ENCODE measurements at regions of chr10 and their contacts with region 1.

Region 1: DNA sequence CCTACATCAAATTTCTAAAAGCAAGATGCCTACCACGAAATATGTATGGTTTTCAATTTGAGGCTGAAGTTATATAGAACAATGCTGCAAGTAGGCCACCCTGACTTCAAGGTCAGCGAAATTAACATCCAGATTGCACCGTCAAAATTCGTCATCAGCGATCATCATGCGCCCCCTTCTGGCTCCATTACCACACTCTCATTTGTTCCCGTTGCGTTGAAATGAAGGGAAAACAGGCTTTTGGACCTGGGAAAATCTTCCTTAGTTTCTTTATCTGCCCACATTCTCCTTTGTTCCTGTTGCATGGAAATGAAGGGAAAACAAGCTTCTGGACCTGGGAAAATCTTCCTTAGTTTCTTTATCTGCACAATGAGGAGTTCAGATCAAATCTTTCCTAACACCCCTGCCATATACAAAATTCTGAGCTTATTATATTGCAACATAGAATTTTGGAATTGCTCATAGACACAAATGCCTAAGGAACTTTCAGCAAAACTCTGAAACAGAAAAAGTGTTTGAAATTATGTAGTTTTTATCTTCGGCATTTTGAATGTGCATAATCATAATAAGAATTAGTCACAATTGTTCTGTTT is 98.2 kb upstream of the PRKCQ start:
- DNase-seq: peak; percentile 23 to 78 (median 68)
- ATAC-seq: peak; percentile 52
- H3K4me3 ChIP-seq: no peak overlapping the region
- H3K4me3 Mint-ChIP-seq: no peak overlapping the region
- H3K27ac ChIP-seq: no peak overlapping the region
- H3K27ac Mint-ChIP-seq: no peak overlapping the region
- H3K4me1 ChIP-seq: no peaks in the 10 kb centered on the region
- H3K4me1 Mint-ChIP-seq: peaks cover 4% of the 10 kb centered on the region
- H3K27me3 ChIP-seq: no peaks in the 10 kb centered on the region
- H3K27me3 Mint-ChIP-seq: no peaks in the 10 kb centered on the region
- CTCF ChIP-seq: peak; percentile 71

Region 2: GRCh38 chr10:6108603-6109443 is 569.5 kb before region 1 on chr10:
- CTCF ChIA-PET with region 1: interaction called, 3 read pairs
- POLR2A ChIA-PET with region 1: no interaction called
- intact Hi-C with region 1: loop called (anchors 2 to 5 kb)
- DNase-seq: peak in 5 of 9 experiments; percentile 15 to 77 (median 44)
- ATAC-seq: peak; percentile 85
- H3K4me3 ChIP-seq: no peak overlapping the region
- H3K4me3 Mint-ChIP-seq: peak overlapping the region; percentile 53
- H3K27ac ChIP-seq: no peak overlapping the region
- H3K27ac Mint-ChIP-seq: peak overlapping the region; percentile 62
- H3K4me1 ChIP-seq: peaks cover 8% of the 10 kb centered on the region
- H3K4me1 Mint-ChIP-seq: peaks cover 29% of the 10 kb centered on the region
- H3K27me3 ChIP-seq: no peaks in the 10 kb centered on the region
- H3K27me3 Mint-ChIP-seq: no peaks in the 10 kb centered on the region
- CTCF ChIP-seq: peak; percentile 86

Region 3: GRCh38 chr10:6348096-6348874 is 330.0 kb before region 1 on chr10:
- CTCF ChIA-PET with region 1: no interaction called
- POLR2A ChIA-PET with region 1: no interaction called
- intact Hi-C with region 1: no loop called
- DNase-seq: peak; percentile 59 to 96 (median 81)
- ATAC-seq: peak; percentile 89
- H3K4me3 ChIP-seq: peak overlapping the region; percentile 30 to 39
- H3K4me3 Mint-ChIP-seq: peak overlapping the region; percentile 81
- H3K27ac ChIP-seq: peak overlapping the region; percentile 71 to 79
- H3K27ac Mint-ChIP-seq: peak overlapping the region; percentile 97
- H3K4me1 ChIP-seq: peaks cover 34% of the 10 kb centered on the region
- H3K4me1 Mint-ChIP-seq: peaks cover 61% of the 10 kb centered on the region
- H3K27me3 ChIP-seq: no peaks in the 10 kb centered on the region
- H3K27me3 Mint-ChIP-seq: no peaks in the 10 kb centered on the region
- CTCF ChIP-seq: no peak

Region 4: GRCh38 chr10:6409971-6410651 is 268.2 kb before region 1 on chr10:
- CTCF ChIA-PET with region 1: interaction called, 65 read pairs
- POLR2A ChIA-PET with region 1: no interaction called
- intact Hi-C with region 1: no loop called
- DNase-seq: peak in 8 of 9 experiments; percentile 15 to 87 (median 56)
- ATAC-seq: peak; percentile 93
- H3K4me3 ChIP-seq: peak overlapping the region in 1 of 2 experiments; percentile 18
- H3K4me3 Mint-ChIP-seq: peak overlapping the region; percentile 43
- H3K27ac ChIP-seq: peak overlapping the region; percentile 42 to 89
- H3K27ac Mint-ChIP-seq: peak overlapping the region; percentile 95
- H3K4me1 ChIP-seq: peaks cover 17% of the 10 kb centered on the region
- H3K4me1 Mint-ChIP-seq: peaks cover 38% of the 10 kb centered on the region
- H3K27me3 ChIP-seq: no peaks in the 10 kb centered on the region
- H3K27me3 Mint-ChIP-seq: no peaks in the 10 kb centered on the region
- CTCF ChIP-seq: no peak

Region 5: DNA sequence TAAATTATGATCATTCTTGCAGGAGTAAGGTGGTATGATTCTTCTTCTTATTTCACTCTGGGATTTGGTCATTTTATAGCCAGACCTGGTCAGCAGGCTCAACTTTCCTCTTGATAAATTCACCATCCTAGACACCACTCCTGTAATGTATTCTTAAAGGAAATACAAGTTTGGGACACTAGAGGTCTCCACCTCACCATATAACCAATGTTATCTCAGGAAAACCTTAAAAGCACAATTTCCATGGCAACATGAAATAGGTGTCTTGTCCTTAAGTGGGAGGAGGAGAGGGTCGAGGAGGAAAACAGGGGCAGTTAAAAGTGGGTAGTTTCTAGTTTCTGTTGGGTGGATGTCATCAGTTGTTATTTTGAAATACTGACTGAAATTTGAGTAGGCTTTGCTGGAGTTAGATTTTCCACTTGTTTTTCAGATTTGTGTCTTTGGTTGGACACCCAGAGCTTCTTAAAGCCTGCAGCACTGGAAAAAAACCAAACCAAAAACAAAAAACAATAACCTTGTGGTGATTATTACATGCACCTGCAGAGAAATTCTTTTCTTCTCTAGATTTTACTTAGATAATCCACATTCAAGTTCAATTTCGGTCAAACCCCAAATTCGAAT is 261.3 kb before region 1 on chr10:
- CTCF ChIA-PET with region 1: interaction called, 65 read pairs
- POLR2A ChIA-PET with region 1: no interaction called
- intact Hi-C with region 1: loop called (anchors 1 kb)
- DNase-seq: peak in 2 of 9 experiments; percentile 65 to 75
- ATAC-seq: peak; percentile 72
- H3K4me3 ChIP-seq: no peak overlapping the region
- H3K4me3 Mint-ChIP-seq: no peak overlapping the region
- H3K27ac ChIP-seq: no peak overlapping the region
- H3K27ac Mint-ChIP-seq: no peak overlapping the region
- H3K4me1 ChIP-seq: no peaks in the 10 kb centered on the region
- H3K4me1 Mint-ChIP-seq: no peaks in the 10 kb centered on the region
- H3K27me3 ChIP-seq: no peaks in the 10 kb centered on the region
- H3K27me3 Mint-ChIP-seq: no peaks in the 10 kb centered on the region
- CTCF ChIP-seq: peak; percentile 74

Region 6: DNA sequence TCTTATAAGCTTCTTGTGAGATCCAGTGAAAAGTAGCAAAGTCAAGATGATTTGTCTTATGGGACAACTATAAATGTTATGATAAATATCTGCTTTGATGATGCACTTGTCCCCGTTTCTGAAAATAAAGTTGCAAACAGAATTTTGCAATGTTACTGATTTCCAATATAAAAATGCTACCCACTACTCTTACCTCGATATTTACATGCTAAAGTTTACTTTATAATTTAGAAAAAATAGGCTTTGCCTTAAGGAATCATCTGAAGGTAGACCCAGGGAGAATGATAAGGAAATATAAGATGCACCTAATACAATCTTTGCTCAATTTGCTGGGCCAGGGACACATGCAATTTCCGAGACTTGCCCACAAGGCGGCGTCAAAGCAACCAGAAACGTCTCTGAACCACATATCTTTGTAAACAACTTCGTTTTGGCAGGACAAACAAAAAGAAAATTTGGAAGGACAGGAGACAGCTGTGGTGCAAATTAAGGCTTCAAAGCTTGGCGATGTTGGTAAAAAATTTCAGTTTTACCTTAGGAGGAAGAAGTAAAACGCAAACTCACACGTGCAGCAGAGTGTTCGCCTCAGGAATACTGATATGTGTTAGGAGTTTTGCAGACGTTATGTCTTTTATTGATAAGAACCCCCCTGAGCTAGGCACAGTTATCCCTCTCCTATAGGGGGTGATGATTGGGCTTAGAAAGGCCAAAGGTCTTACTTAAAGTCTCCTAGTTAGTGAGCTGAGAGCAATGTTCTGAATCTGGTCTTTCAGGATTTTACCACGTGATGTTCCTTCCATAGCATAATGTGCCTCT is 232.6 kb before region 1 on chr10:
- CTCF ChIA-PET with region 1: interaction called, 14 read pairs
- POLR2A ChIA-PET with region 1: no interaction called
- intact Hi-C with region 1: loop called (anchors 1 to 2 kb)
- DNase-seq: peak; percentile 36 to 76 (median 64)
- ATAC-seq: peak; percentile 58
- H3K4me3 ChIP-seq: no peak overlapping the region
- H3K4me3 Mint-ChIP-seq: no peak overlapping the region
- H3K27ac ChIP-seq: peak overlapping the region in 1 of 2 experiments; percentile 47
- H3K27ac Mint-ChIP-seq: peak overlapping the region; percentile 83
- H3K4me1 ChIP-seq: peaks cover 8% of the 10 kb centered on the region
- H3K4me1 Mint-ChIP-seq: peaks cover 22% of the 10 kb centered on the region
- H3K27me3 ChIP-seq: no peaks in the 10 kb centered on the region
- H3K27me3 Mint-ChIP-seq: no peaks in the 10 kb centered on the region
- CTCF ChIP-seq: peak; percentile 73

Region 7: DNA sequence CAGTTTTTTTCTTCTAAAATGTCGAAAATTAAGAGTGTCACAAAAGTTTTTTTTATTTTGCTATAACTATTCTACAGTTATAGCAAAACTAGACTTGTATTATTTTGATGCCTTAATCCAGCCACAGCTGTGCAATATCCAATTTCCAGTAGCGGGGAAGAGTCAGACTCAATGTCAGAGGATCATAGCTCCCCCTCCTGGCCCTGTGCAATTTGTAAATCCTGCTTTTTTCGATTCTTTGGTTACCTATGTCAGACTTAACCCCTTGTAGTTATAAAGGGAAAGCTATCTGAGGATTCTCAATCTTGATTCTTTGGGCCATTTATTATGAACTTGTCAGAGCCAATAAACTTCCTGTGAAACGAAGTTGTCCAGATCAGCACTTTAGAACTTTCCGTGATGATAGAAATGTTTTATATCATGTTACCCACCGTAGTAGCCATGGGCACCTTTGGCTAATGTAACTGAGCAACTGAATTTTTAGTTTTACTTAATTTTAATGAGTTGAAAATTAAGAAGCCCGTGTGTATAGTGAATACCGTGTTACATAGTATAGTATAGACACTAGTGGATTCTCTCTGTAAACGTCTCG is 10.5 kb before region 1 on chr10:
- CTCF ChIA-PET with region 1: interaction called, 34 read pairs
- POLR2A ChIA-PET with region 1: interaction called, 3 read pairs
- intact Hi-C with region 1: no loop called
- DNase-seq: peak in 3 of 9 experiments; percentile 36 to 56 (median 40)
- ATAC-seq: no peak
- H3K4me3 ChIP-seq: no peak overlapping the region
- H3K4me3 Mint-ChIP-seq: no peak overlapping the region
- H3K27ac ChIP-seq: no peak overlapping the region
- H3K27ac Mint-ChIP-seq: no peak overlapping the region
- H3K4me1 ChIP-seq: peaks cover 13% of the 10 kb centered on the region
- H3K4me1 Mint-ChIP-seq: peaks cover 18% of the 10 kb centered on the region
- H3K27me3 ChIP-seq: no peaks in the 10 kb centered on the region
- H3K27me3 Mint-ChIP-seq: no peaks in the 10 kb centered on the region
- CTCF ChIP-seq: peak; percentile 44

Region 8: GRCh38 chr10:6688661-6689435 is 10.5 kb after region 1 on chr10:
- CTCF ChIA-PET with region 1: interaction called, 24 read pairs
- POLR2A ChIA-PET with region 1: no interaction called
- intact Hi-C with region 1: no loop called
- DNase-seq: no peak
- ATAC-seq: no peak
- H3K4me3 ChIP-seq: no peak overlapping the region
- H3K4me3 Mint-ChIP-seq: no peak overlapping the region
- H3K27ac ChIP-seq: no peak overlapping the region
- H3K27ac Mint-ChIP-seq: no peak overlapping the region
- H3K4me1 ChIP-seq: no peaks in the 10 kb centered on the region
- H3K4me1 Mint-ChIP-seq: no peaks in the 10 kb centered on the region
- H3K27me3 ChIP-seq: no peaks in the 10 kb centered on the region
- H3K27me3 Mint-ChIP-seq: peaks cover 15% of the 10 kb centered on the region
- CTCF ChIP-seq: no peak